ENCODE measurements at regions of chr15 and their contacts with region 1.

Region 1: GRCh38 chr15:67065444-67066093 is at the start of gene SMAD3:
- DNase-seq: peak; percentile 85
- ATAC-seq: peak; percentile 39
- H3K4me3 Mint-ChIP-seq: peak within 1 kb of the TSS; percentile 91
- H3K27ac Mint-ChIP-seq: peak within 1 kb of the TSS; percentile 92
- H3K4me1 Mint-ChIP-seq: peaks cover 47% of the 10 kb centered on the region
- H3K27me3 Mint-ChIP-seq: peaks cover 17% of the 10 kb centered on the region
- total RNA-seq, gene SMAD3: 33.7 to 40.8 TPM

Region 2: GRCh38 chr15:66085128-66085527 is 980.4 kb before region 1 on chr15:
- CTCF ChIA-PET with region 1: no interaction called
- POLR2A ChIA-PET with region 1: no interaction called
- intact Hi-C with region 1: no loop called
- DNase-seq: peak; percentile 32
- ATAC-seq: no peak
- H3K4me3 Mint-ChIP-seq: no peak overlapping the region
- H3K27ac Mint-ChIP-seq: no peak overlapping the region
- H3K4me1 Mint-ChIP-seq: no peaks in the 10 kb centered on the region
- H3K27me3 Mint-ChIP-seq: peaks cover 2% of the 10 kb centered on the region

Region 3: GRCh38 chr15:66951531-66952320 is 113.8 kb before region 1 on chr15:
- CTCF ChIA-PET with region 1: interaction called, 4 read pairs
- POLR2A ChIA-PET with region 1: no interaction called
- intact Hi-C with region 1: loop called in 1 of 2 experiments (anchors 5 kb)
- DNase-seq: no peak
- ATAC-seq: no peak
- H3K4me3 Mint-ChIP-seq: no peak overlapping the region
- H3K27ac Mint-ChIP-seq: no peak overlapping the region
- H3K4me1 Mint-ChIP-seq: peaks cover 5% of the 10 kb centered on the region
- H3K27me3 Mint-ChIP-seq: no peaks in the 10 kb centered on the region

Region 4: DNA sequence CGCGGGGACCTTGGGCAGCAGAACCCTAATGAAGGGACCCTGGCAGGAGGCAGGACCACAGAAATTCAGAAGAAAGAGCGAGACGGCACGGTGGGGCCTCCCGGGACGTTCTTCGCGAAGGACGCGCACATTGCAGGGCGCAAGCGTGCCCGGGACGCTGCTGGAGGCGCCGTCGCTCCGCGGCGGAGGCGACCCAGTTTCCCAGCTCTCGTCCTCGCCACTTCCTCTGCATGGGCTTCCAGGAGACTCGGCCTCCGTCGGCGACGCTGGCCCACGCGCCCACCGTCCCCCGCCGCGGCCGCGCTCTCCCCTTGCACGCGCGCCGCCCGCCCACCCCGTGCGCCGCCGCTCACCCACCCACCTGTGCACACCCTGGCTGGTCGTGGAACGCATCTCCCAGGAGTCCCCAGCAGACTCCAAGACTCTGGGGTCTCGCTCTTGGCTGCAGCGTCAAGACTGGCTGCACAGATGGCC is 32.0 kb before region 1 on chr15:
- CTCF ChIA-PET with region 1: interaction called, 3 read pairs
- POLR2A ChIA-PET with region 1: no interaction called
- intact Hi-C with region 1: loop called (anchors 2 to 5 kb)
- DNase-seq: peak; percentile 48
- ATAC-seq: peak; percentile 47
- H3K4me3 Mint-ChIP-seq: no peak overlapping the region
- H3K27ac Mint-ChIP-seq: peak overlapping the region; percentile 5
- H3K4me1 Mint-ChIP-seq: peaks cover 13% of the 10 kb centered on the region
- H3K27me3 Mint-ChIP-seq: peaks cover 2% of the 10 kb centered on the region

Region 5: GRCh38 chr15:67134067-67134838 is 68.7 kb after region 1 on chr15:
- CTCF ChIA-PET with region 1: interaction called, 4 read pairs
- POLR2A ChIA-PET with region 1: no interaction called
- intact Hi-C with region 1: loop called in 1 of 2 experiments (anchors 2 kb)
- DNase-seq: peak; percentile 78
- ATAC-seq: peak; percentile 86
- H3K4me3 Mint-ChIP-seq: peak overlapping the region; percentile 80
- H3K27ac Mint-ChIP-seq: peak overlapping the region; percentile 98
- H3K4me1 Mint-ChIP-seq: peaks cover 87% of the 10 kb centered on the region
- H3K27me3 Mint-ChIP-seq: no peaks in the 10 kb centered on the region